ENCODE measurements at regions of chr5 and their contacts with region 1.

Region 1: DNA sequence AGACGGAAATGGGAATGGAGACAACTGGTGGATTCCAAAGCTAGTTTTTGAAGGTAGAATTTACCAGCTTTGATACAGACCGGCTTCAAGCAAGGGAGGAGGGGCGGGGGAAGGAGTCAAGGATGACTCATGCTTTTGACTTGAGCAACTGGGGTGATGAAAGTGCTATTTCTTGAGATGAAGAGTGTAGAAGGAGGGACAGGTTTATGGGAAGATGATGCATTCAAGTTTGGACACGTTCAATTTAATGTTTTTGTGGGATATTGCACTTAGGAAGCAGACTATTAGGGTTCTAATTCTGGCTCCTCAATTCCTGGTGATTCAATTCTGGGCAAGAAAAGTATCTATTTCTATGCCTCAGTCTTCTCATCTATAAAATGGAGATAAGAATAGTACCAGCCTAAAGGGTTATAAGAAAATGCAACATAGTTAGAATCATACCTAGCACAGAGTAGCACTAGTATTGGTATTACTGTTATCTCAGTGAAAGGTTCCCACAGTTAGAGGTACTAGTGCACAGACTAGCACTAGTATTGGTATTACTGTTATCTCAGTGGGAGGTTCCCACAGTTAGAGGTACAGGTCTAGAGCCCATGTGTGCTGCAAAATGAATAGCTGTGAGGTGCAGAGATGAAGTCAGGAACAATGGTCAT is 4.6 kb downstream of the NIPAL4 start:
- DNase-seq: peak; percentile 92
- H3K4me3 Mint-ChIP-seq: peak overlapping the region; percentile 28
- H3K27ac Mint-ChIP-seq: peak overlapping the region; percentile 89
- H3K4me1 Mint-ChIP-seq: peaks cover 36% of the 10 kb centered on the region
- H3K27me3 Mint-ChIP-seq: peaks cover 16% of the 10 kb centered on the region

Region 2: GRCh38 chr5:156920042-156920860 is 544.4 kb before region 1 on chr5:
- CTCF ChIA-PET with region 1: no interaction called
- intact Hi-C with region 1: loop called (anchors 1 kb)
- DNase-seq: peak; percentile 89
- H3K4me3 Mint-ChIP-seq: peak overlapping the region; percentile 55
- H3K27ac Mint-ChIP-seq: peak overlapping the region; percentile 93
- H3K4me1 Mint-ChIP-seq: peaks cover 70% of the 10 kb centered on the region
- H3K27me3 Mint-ChIP-seq: no peaks in the 10 kb centered on the region

Region 3: DNA sequence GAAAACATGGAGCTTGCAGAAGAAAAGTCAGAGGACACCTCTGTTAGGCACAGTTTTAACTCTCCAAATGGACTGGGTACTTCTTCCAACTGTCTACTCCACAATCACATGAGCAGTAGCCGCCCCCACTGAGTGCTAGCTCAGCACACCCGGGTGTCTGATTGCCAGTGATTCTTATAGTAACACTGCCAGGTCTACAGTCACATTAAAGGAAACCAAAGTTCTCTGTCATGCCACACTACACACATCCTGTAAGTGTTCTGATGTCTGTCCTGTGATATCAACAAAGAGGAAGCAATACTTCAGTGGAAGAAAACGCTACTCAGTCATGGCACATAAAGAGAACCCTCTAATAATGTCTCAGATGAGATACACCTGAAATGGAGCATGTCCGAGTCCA is 355.7 kb before region 1 on chr5 and contains the start of gene HAVCR2:
- CTCF ChIA-PET with region 1: no interaction called
- intact Hi-C with region 1: loop called (anchors 2 kb)
- DNase-seq: peak; percentile 87
- H3K4me3 Mint-ChIP-seq: peak within 1 kb of the TSS; percentile 65
- H3K27ac Mint-ChIP-seq: peak within 1 kb of the TSS; percentile 87
- H3K4me1 Mint-ChIP-seq: peaks cover 40% of the 10 kb centered on the region
- H3K27me3 Mint-ChIP-seq: no peaks in the 10 kb centered on the region
- total RNA-seq, gene HAVCR2: 10.2 to 10.4 TPM

Region 4: DNA sequence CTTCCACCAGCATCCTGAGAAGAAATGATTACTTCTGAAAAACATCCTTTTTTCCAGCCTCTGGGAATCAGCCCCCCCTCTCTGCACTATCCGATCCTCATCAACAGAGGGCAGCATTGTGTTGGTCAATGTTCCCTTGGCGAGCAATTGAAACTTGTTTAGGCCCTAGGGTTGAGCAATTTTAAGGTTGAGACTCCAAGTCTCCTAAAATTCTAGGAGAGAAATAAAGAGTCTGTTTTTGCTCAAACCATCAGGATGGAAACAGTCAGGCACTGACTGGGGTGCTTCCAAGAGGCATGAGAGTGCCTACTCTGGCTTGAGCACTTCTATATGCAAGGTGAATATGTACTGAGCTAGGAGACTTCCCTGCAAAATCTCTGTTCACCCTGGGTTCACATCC is 211.1 kb before region 1 on chr5:
- CTCF ChIA-PET with region 1: no interaction called
- intact Hi-C with region 1: loop called (anchors 10 kb)
- DNase-seq: no peak
- H3K4me3 Mint-ChIP-seq: no peak overlapping the region
- H3K27ac Mint-ChIP-seq: peak overlapping the region; percentile 97
- H3K4me1 Mint-ChIP-seq: peaks cover 91% of the 10 kb centered on the region
- H3K27me3 Mint-ChIP-seq: no peaks in the 10 kb centered on the region

Region 5: GRCh38 chr5:157390551-157391297 is 73.9 kb before region 1 on chr5:
- CTCF ChIA-PET with region 1: no interaction called
- intact Hi-C with region 1: loop called (anchors 1 kb)
- DNase-seq: peak; percentile 84
- H3K4me3 Mint-ChIP-seq: no peak overlapping the region
- H3K27ac Mint-ChIP-seq: peak overlapping the region; percentile 92
- H3K4me1 Mint-ChIP-seq: peaks cover 18% of the 10 kb centered on the region
- H3K27me3 Mint-ChIP-seq: no peaks in the 10 kb centered on the region

Region 6: DNA sequence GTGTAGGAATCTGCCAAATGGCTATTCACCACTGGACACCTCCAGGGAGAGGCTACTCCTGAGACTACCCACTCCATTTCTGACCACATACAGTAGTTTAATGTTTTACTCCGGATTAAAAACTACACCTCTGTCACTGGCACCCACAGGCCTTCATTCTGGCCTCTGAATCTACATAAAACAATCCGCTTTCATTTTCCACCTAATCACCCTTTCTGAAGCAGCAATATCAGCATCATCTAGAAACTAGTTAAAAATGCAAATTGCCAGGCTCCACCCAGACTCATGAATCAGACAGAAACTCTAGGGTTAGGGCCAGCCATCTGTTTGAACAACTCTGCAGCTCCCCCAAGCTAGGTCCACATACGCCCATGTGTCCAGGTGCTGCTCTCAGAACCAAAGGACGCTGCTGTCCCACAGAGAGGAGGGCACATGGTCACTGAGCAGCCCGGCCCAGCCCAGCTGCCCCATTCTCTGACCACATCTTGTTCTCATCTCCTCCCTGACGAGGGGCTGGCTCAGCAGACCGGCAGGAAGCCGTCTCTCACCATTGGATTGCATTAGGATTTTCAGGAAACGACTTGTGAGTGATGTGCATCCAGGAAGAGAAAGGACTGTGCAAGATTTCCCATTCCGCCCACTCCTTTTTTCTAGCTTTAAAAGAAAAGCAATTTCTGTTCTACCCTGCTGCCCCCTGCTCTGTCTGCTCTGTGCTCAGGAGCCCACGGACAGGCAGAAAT is 76.2 kb after region 1 on chr5:
- CTCF ChIA-PET with region 1: no interaction called
- intact Hi-C with region 1: loop called (anchors 2 kb)
- DNase-seq: peak; percentile 63
- H3K4me3 Mint-ChIP-seq: peak overlapping the region; percentile 8
- H3K27ac Mint-ChIP-seq: peak overlapping the region; percentile 66
- H3K4me1 Mint-ChIP-seq: peaks cover 50% of the 10 kb centered on the region
- H3K27me3 Mint-ChIP-seq: no peaks in the 10 kb centered on the region

Region 7: DNA sequence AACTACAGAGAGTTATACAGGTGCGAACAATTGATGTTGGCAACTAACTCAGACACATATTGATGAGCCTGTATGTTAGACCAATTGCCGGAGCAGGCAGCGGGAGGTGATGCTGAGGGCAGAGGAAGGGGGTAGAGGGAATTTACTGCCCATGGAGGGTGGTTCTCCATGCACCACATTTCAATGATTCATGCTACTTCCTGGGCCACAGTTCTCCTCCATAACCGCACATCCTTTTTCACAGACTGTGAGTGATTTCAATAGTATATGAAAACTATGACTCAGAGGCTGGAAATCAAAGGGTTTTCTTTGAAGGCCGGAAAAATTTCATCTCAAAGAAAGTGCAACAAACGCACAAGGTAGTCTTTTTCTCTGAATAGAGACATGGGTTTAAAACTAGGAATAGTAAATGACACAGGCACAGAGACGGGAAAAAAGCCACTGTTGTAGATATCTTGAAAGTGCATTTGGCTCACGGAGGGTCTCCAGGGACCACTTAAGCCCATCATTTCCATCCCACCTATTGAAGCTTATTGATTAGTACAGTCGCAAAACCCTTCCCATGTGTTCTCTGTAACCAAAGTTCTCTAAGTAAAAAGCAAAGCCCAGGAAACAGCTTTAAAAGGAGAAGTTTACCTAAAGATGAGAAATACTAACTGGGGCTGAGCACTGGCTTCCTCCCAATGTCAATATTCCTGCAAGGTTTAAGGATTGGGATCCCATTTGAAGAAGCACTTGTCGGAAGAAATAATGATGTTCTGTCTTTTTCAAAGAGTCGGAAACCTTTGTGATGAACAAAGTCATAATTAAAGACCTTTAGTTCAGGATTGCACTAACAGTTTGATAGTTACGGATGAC is 138.9 kb after region 1 on chr5:
- CTCF ChIA-PET with region 1: no interaction called
- intact Hi-C with region 1: loop called (anchors 1 kb)
- DNase-seq: peak; percentile 82
- H3K4me3 Mint-ChIP-seq: peak overlapping the region; percentile 3
- H3K27ac Mint-ChIP-seq: peak overlapping the region; percentile 94
- H3K4me1 Mint-ChIP-seq: peaks cover 87% of the 10 kb centered on the region
- H3K27me3 Mint-ChIP-seq: no peaks in the 10 kb centered on the region

Measured in activated naive CD4-positive, alpha-beta T cell treated with anti-CD3 and anti-CD28 coated beads for 36 hours (primary cell).